GM13977 (cell line): ENCODE measurements at regions of chr1 and their contacts with region 1.

Region 1: GRCh38 chr1:198771563-198772153 is 132.8 kb downstream of the PTPRC start:
- DNase-seq: peak; percentile 14
- CTCF ChIP-seq: peak; percentile 46

Region 2: DNA sequence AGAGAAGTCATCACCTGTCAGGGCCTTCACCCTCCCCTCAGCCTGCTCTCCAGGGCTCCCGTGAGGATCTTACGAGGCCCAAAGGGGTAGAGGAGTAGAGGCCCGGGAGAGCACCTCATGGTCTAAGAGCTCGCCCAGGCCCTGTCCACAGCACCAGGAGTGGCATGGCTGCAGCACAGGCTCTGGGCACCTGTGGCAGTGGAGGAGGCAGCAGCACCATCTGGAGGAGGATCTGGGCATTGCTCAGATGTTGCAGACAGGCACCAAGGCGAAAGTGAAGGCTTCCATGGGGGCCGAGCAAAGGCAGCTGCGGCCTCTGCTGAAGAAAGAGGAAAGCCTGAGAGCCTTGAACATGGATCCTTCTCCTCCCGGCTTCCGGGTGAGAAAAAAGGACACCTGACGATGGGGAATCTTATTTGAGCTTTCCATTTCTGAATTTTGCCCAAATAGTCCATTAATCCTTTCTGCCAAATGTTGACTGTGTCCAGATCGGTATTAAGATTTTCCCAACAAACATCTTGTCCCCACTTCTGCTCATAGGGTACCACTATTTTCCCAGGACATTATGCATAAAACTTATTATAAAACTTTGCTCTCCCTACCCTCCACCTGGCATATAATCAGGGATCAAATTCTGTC is 471.9 kb after region 1 on chr1:
- in situ Hi-C with region 1: loop called (anchors 25 kb)
- DNase-seq: peak; percentile 42
- CTCF ChIP-seq: peak; percentile 93

Region 3: GRCh38 chr1:199463521-199464128 is 692.0 kb after region 1 on chr1:
- in situ Hi-C with region 1: loop called (anchors 25 kb)
- DNase-seq: peak; percentile 6
- CTCF ChIP-seq: peak; percentile 67